ENCODE measurements at regions of chr7 and their contacts with region 1.

Region 1: DNA sequence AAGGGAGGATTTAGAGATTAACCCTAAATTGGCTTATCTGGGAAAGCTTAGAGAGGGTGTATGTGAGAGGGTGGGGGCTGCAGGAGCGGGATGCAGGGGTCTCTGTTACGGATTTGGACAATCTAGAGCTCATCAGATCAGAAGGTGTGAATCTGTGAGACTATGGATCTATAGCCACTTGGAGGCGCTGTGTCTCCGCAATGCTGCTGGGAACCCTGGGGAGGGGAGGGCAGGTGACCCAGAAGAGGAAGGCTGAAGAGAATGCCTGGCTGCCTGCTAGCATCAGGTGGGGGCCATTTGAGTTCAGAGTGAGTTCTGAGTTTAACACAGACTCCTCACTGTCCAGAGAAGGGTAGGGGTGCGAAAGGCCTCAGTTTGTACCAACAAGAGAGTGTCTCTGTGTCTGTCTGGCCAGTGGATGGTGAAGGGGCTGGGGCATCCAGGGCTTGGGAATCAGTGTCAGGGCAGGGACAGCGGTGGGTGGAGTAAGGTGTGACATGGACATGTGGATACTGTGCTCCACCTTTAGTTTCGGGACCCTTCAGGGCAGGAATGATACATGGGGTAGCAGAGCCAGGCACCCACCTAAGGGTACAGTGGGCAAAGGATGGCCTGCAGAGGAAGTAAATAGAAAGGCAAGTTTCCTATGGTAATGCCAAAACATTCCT is 187.3 kb upstream of the PRSS58 start:
- DNase-seq: peak; percentile 80
- ATAC-seq: peak; percentile 96
- H3K4me3 Mint-ChIP-seq: no peak overlapping the region
- H3K27ac Mint-ChIP-seq: no peak overlapping the region
- H3K4me1 Mint-ChIP-seq: peaks cover 27% of the 10 kb centered on the region
- H3K27me3 Mint-ChIP-seq: no peaks in the 10 kb centered on the region
- CTCF ChIP-seq: peak; percentile 65

Region 2: DNA sequence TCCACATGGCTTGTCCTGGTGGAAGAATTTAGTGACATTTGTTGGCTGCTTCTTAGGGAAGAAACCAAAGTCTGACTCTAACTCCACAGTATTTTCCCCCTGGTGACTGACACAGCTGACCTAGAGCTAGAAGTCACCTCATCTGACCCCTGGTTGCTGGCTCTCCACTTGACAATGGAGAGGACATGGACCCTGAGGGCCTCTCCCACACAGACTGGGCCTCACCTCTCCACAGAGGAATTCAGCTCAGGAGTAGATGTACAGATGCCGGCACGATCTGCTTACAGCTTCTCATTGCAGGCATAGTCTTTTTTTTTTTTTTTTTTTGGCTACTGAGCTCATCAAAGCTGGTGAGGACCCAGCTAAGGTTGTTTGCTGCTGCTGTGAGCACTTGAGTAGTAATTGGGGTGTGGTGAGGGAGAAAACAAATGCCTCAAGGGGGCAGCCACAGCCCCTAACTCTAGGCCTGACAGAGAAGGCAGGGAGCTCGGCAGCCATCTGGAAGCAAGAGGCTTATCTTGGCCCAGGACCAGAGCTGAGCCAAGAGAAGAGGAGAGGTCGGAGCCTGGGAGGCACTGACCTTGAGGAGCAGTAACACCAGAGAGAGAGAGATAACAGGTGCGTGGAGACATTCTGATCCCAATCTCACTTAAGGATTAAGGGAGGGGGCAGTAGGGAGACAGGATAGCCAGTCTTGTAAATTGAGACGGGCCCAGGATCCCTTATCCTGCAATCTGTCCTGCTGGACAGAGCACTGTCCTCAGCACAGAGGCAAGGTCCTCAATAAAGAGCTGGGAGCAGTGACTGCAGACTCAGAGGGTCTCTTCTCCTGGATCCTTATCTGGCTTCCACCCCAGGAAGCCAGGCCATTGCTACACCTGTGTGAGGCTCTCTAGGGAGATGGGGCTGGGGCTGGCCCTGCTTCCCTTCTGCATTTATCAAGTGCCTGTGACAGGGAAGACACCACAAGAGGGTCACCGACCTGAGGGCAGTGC is 196.7 kb before region 1 on chr7:
- CTCF ChIA-PET with region 1: no interaction called
- POLR2A ChIA-PET with region 1: no interaction called
- DNase-seq: peak; percentile 25
- ATAC-seq: peak; percentile 86
- H3K4me3 Mint-ChIP-seq: no peak overlapping the region
- H3K27ac Mint-ChIP-seq: no peak overlapping the region
- H3K4me1 Mint-ChIP-seq: peaks cover 16% of the 10 kb centered on the region
- H3K27me3 Mint-ChIP-seq: no peaks in the 10 kb centered on the region; the same call in 1 of the 2 replicates
- CTCF ChIP-seq: no peak

Region 3: DNA sequence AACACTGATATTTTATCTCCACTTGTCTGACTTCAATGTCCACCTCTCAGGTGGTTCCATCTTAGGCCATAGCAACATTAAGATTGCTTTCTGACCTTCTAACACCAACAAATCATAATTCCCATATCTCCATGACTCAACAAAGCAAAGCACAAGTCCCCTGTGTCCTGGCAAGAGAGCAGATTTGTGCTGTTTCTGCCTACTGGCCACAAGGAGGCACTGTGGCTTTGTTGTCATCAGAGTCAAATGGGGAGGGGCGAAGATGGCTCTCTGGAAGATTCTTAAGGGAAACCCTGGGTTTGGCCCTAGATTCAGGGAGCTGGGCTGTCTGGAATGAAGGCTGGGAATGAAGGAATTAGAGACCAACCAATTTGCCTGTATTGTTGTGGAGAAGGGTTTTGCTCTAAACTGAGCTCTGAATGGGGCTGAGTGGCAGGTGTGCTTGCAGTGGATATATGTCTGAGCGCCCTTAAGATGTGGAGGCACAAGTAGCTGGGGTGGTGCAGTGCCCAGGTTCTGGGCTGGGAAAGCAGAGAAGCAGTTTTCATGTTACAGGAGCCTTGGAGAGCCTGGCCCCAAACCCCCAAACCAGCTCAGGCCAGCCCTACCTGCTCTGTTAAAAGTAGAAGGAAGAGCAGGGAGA is 32.5 kb before region 1 on chr7:
- CTCF ChIA-PET with region 1: interaction called, 13 read pairs
- POLR2A ChIA-PET with region 1: no interaction called
- DNase-seq: peak; percentile 55
- ATAC-seq: peak; percentile 95
- H3K4me3 Mint-ChIP-seq: no peak overlapping the region
- H3K27ac Mint-ChIP-seq: no peak overlapping the region
- H3K4me1 Mint-ChIP-seq: peaks cover 14% of the 10 kb centered on the region
- H3K27me3 Mint-ChIP-seq: no peaks in the 10 kb centered on the region; the same call in 1 of the 2 replicates
- CTCF ChIP-seq: peak; percentile 77

Region 4: DNA sequence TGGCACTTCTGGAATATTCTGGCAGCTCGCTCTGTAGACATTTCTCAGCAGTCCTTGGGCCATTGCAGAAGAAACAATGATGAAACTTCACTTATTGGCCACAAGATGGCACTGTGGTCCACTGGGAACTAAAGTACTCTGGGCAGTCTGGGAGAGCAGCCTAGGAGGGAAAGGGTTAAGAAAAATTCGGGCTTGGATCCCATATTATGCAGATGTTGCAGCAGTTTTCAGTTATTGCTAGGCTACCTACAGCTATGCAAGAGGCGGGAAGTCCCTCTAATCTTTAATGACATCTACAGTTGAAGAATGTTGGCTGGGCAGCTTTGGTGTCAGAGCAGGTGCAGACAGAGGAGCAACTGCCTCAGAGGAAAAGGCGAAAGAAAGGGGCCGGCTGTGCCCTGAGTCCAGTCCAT is 14.4 kb after region 1 on chr7:
- CTCF ChIA-PET with region 1: interaction called, 37 read pairs
- POLR2A ChIA-PET with region 1: no interaction called
- DNase-seq: no peak
- ATAC-seq: peak; percentile 94
- H3K4me3 Mint-ChIP-seq: no peak overlapping the region
- H3K27ac Mint-ChIP-seq: no peak overlapping the region
- H3K4me1 Mint-ChIP-seq: peaks cover 13% of the 10 kb centered on the region
- H3K27me3 Mint-ChIP-seq: no peaks in the 10 kb centered on the region; the same call in 1 of the 2 replicates
- CTCF ChIP-seq: peak; percentile 65

Region 5: GRCh38 chr7:142478479-142479072 is 33.4 kb after region 1 on chr7:
- CTCF ChIA-PET with region 1: interaction called, 15 read pairs
- POLR2A ChIA-PET with region 1: no interaction called
- DNase-seq: peak; percentile 38
- ATAC-seq: peak; percentile 79
- H3K4me3 Mint-ChIP-seq: no peak overlapping the region
- H3K27ac Mint-ChIP-seq: no peak overlapping the region
- H3K4me1 Mint-ChIP-seq: peaks cover 11% of the 10 kb centered on the region
- H3K27me3 Mint-ChIP-seq: peaks cover 12% of the 10 kb centered on the region
- CTCF ChIP-seq: peak; percentile 62

Region 6: DNA sequence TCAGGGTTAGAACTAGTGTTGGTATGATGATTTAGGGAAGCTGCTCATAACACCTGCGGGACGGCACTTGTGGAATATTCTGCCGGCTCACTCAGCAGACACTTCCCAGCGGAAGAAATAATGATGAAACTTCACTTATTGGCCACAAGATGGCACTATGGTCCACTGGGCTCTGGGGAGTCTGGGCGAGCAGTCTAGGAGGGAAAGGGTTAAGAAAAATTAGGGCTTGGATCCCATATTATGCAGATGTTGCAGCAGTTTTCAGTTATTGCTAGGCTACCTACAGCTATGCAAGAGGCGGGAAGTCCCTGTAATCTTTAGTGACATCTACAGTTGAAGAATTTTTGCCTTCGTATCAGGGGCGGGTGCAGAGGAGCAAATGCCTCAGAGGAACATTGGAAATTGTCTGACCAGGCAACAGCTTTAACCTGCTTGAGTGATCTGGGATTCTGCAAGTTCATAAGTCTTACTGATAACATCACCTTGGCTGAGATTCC is 51.4 kb after region 1 on chr7:
- CTCF ChIA-PET with region 1: interaction called, 10 read pairs
- POLR2A ChIA-PET with region 1: no interaction called
- DNase-seq: no peak
- ATAC-seq: peak; percentile 82
- H3K4me3 Mint-ChIP-seq: peak overlapping the region; percentile 45
- H3K27ac Mint-ChIP-seq: no peak overlapping the region
- H3K4me1 Mint-ChIP-seq: no peaks in the 10 kb centered on the region
- H3K27me3 Mint-ChIP-seq: peaks cover 17% of the 10 kb centered on the region
- CTCF ChIP-seq: peak; percentile 74

Region 7: GRCh38 chr7:142587578-142588191 is 142.5 kb after region 1 on chr7:
- CTCF ChIA-PET with region 1: interaction called, 10 read pairs
- POLR2A ChIA-PET with region 1: no interaction called
- DNase-seq: no peak
- ATAC-seq: peak; percentile 98
- H3K4me3 Mint-ChIP-seq: no peak overlapping the region
- H3K27ac Mint-ChIP-seq: no peak overlapping the region
- H3K4me1 Mint-ChIP-seq: peaks cover 10% of the 10 kb centered on the region
- H3K27me3 Mint-ChIP-seq: no peaks in the 10 kb centered on the region; the same call in 1 of the 2 replicates
- CTCF ChIP-seq: no peak